CD8-positive, alpha-beta T cell (primary cell): ENCODE measurements at regions of chr2 and their contacts with region 1.

Region 1: DNA sequence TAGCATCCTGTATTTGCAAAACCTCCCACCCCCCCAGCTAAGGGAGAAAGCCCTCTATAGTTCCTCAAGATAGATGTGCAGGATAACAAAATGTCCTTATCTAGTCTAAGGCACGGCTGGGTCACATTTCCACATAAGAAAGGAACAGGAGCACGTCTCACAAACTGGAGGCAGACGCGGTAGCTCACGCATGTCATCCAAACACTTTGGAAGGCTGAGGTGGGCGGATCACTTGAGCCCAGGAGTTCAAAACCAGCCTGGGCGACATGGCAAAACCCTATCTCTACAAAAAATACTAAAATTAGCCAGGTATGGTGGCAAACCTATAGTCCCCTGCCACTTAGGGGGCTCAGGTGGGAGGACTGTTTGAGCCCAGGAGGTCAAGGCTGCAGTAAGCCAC is 9.3 kb downstream of the SF3B1 start:
- DNase-seq: no peak
- ATAC-seq: no peak
- H3K4me3 ChIP-seq: peak overlapping the region in 1 of 2 experiments; percentile 5
- H3K4me3 Mint-ChIP-seq: peak overlapping the region; percentile 13
- H3K27ac ChIP-seq: no peak overlapping the region
- H3K27ac Mint-ChIP-seq: peak overlapping the region; percentile 53
- H3K4me1 ChIP-seq: peaks cover 64% of the 10 kb centered on the region
- H3K4me1 Mint-ChIP-seq: peaks cover 75% of the 10 kb centered on the region
- H3K27me3 ChIP-seq: no peaks in the 10 kb centered on the region
- H3K27me3 Mint-ChIP-seq: no peaks in the 10 kb centered on the region
- CTCF ChIP-seq: no peak

Region 2: GRCh38 chr2:197453161-197453914 is 27.8 kb after region 1 on chr2 and contains the start of gene COQ10B:
- CTCF ChIA-PET with region 1: no interaction called
- POLR2A ChIA-PET with region 1: no interaction called
- intact Hi-C with region 1: loop called in 1 of 2 experiments (anchors 5 kb)
- DNase-seq: peak; percentile 95 to 100 (median 97)
- ATAC-seq: peak; percentile 87
- H3K4me3 ChIP-seq: peak within 1 kb of the TSS; percentile 62 to 74
- H3K4me3 Mint-ChIP-seq: peak within 1 kb of the TSS; percentile 99
- H3K27ac ChIP-seq: peak within 1 kb of the TSS; percentile 93 to 95
- H3K27ac Mint-ChIP-seq: peak within 1 kb of the TSS; percentile 100
- H3K4me1 ChIP-seq: peaks cover 28% of the 10 kb centered on the region
- H3K4me1 Mint-ChIP-seq: peaks cover 48% of the 10 kb centered on the region
- H3K27me3 ChIP-seq: no peaks in the 10 kb centered on the region
- H3K27me3 Mint-ChIP-seq: no peaks in the 10 kb centered on the region
- CTCF ChIP-seq: no peak
- total RNA-seq, gene COQ10B: 66.9 to 67.6 TPM

Region 3: GRCh38 chr2:197461057-197461456 is 35.5 kb after region 1 on chr2:
- CTCF ChIA-PET with region 1: interaction called, 6 read pairs
- POLR2A ChIA-PET with region 1: no interaction called
- intact Hi-C with region 1: loop called (anchors 5 kb)
- DNase-seq: no peak
- ATAC-seq: no peak
- H3K4me3 ChIP-seq: no peak overlapping the region
- H3K4me3 Mint-ChIP-seq: no peak overlapping the region
- H3K27ac ChIP-seq: no peak overlapping the region
- H3K27ac Mint-ChIP-seq: no peak overlapping the region
- H3K4me1 ChIP-seq: peaks cover 6% of the 10 kb centered on the region
- H3K4me1 Mint-ChIP-seq: peaks cover 34% of the 10 kb centered on the region
- H3K27me3 ChIP-seq: no peaks in the 10 kb centered on the region
- H3K27me3 Mint-ChIP-seq: no peaks in the 10 kb centered on the region
- CTCF ChIP-seq: no peak